Mammary epithelial cell (primary cell): ENCODE measurements at regions of chr11 and their contacts with region 1.

Region 1: DNA sequence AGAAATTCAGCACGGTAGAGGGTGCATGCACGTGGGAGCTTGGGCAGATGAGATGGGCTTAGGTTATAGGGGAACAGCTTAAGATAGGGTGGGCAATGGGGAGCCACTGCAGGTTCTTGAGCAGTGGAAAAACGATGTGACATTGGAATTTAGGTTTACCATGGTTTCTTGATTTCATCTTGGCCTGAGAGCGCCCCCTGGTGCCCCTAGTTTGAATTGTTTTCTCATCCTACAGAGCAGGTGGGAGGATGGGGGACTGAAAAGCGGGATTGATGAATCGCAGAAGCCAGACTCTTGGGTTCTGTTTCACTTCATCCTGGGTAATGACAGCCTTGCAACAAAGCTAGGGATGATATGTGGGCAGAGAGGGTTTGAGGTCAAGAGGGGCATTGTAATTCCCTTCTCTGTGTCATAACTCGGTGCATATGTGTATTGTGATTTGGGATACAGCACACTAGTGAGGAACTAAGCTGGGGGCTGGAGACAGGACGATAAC is 6.7 kb upstream of the MCAM start:
- DNase-seq: peak; percentile 52
- H3K4me3 ChIP-seq: no peak overlapping the region
- H3K27ac ChIP-seq: no peak overlapping the region
- H3K4me1 ChIP-seq: peaks cover 29% of the 10 kb centered on the region
- H3K27me3 ChIP-seq: no peaks in the 10 kb centered on the region
- CTCF ChIP-seq: peak; percentile 78 to 85

Region 2: DNA sequence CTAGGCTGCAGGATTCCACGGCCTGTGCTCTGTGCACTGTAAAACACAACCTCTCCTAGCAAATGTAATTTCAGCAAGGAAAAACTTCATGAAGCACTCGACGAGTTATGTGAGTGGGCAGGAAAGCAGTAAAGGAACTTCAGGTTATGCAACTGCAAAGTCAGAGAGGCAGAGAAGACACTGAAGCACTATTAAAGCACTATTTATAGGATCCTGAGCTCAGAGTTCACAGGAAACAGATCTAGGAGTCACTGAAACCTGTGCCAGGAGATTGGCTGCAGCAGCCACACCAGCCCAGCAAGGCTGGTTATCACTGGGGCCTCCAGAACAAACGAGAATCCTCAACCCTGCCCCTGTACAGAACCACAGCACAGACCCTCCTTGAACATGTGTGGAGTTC is 1239.3 kb before region 1 on chr11:
- CTCF ChIA-PET with region 1: no interaction called
- dilution Hi-C with region 1: no loop called
- in situ Hi-C with region 1: no loop called
- intact Hi-C with region 1: no loop called
- DNase-seq: peak; percentile 58
- H3K4me3 ChIP-seq: no peak overlapping the region
- H3K27ac ChIP-seq: no peak overlapping the region
- H3K4me1 ChIP-seq: peaks cover 30% of the 10 kb centered on the region
- H3K27me3 ChIP-seq: no peaks in the 10 kb centered on the region
- CTCF ChIP-seq: no peak

Region 3: GRCh38 chr11:119237515-119237914 is 86.1 kb before region 1 on chr11:
- CTCF ChIA-PET with region 1: no interaction called
- dilution Hi-C with region 1: no loop called
- in situ Hi-C with region 1: no loop called
- intact Hi-C with region 1: no loop called
- DNase-seq: no peak
- H3K4me3 ChIP-seq: no peak overlapping the region
- H3K27ac ChIP-seq: no peak overlapping the region
- H3K4me1 ChIP-seq: peaks cover 6% of the 10 kb centered on the region
- H3K27me3 ChIP-seq: no peaks in the 10 kb centered on the region
- CTCF ChIP-seq: no peak

Region 4: GRCh38 chr11:119334174-119334930 is 10.8 kb after region 1 on chr11 and contains the start of gene RNF26:
- CTCF ChIA-PET with region 1: interaction called, 4 read pairs
- dilution Hi-C with region 1: no loop called
- in situ Hi-C with region 1: no loop called
- intact Hi-C with region 1: loop called (anchors 2 kb)
- DNase-seq: peak; percentile 95
- H3K4me3 ChIP-seq: peak within 1 kb of the TSS; percentile 63 to 97 (median 93)
- H3K27ac ChIP-seq: peak within 1 kb of the TSS; percentile 88
- H3K4me1 ChIP-seq: peaks cover 22% of the 10 kb centered on the region
- H3K27me3 ChIP-seq: no peaks in the 10 kb centered on the region
- CTCF ChIP-seq: no peak
- total RNA-seq, gene RNF26: 3.7 to 34.4 TPM